ENCODE measurements at regions of chr6 and their contacts with region 1.

Region 1: GRCh38 chr6:7073821-7074525 is 33.8 kb upstream of the RREB1 start:
- DNase-seq: peak; percentile 58
- ATAC-seq: peak; percentile 98
- H3K4me3 Mint-ChIP-seq: peak overlapping the region; percentile 57
- H3K27ac Mint-ChIP-seq: peak overlapping the region; percentile 87
- H3K4me1 Mint-ChIP-seq: peaks cover 28% of the 10 kb centered on the region
- H3K27me3 Mint-ChIP-seq: no peaks in the 10 kb centered on the region
- CTCF ChIP-seq: no peak

Region 2: DNA sequence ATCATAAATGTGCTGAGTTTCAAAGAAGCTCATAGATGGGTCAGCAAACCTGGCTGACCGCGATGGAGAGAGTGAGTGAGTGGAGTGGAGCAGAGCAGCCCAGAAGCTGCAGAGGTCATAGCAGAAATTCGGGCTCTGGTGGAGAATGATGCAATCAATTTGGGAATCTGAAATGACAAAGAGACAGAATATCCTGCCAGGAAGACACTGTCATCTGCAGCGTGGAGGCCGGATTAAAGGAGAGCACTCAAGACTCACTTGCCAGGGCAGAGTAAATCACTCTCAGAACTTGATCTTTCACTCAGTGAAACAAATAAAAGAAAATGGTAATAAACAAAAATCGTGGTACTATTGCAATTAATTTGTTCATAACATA is 75.8 kb before region 1 on chr6:
- CTCF ChIA-PET with region 1: no interaction called
- POLR2A ChIA-PET with region 1: no interaction called
- intact Hi-C with region 1: no loop called
- DNase-seq: no peak
- ATAC-seq: no peak
- H3K4me3 Mint-ChIP-seq: no peak overlapping the region
- H3K27ac Mint-ChIP-seq: no peak overlapping the region
- H3K4me1 Mint-ChIP-seq: no peaks in the 10 kb centered on the region
- H3K27me3 Mint-ChIP-seq: no peaks in the 10 kb centered on the region
- CTCF ChIP-seq: no peak

Region 3: GRCh38 chr6:7051233-7052114 is 22.5 kb before region 1 on chr6:
- CTCF ChIA-PET with region 1: interaction called, 4 read pairs
- POLR2A ChIA-PET with region 1: interaction called, 42 read pairs
- intact Hi-C with region 1: loop called (anchors 1 kb)
- DNase-seq: peak; percentile 61
- ATAC-seq: peak; percentile 86
- H3K4me3 Mint-ChIP-seq: peak overlapping the region; percentile 76
- H3K27ac Mint-ChIP-seq: peak overlapping the region; percentile 56
- H3K4me1 Mint-ChIP-seq: peaks cover 38% of the 10 kb centered on the region
- H3K27me3 Mint-ChIP-seq: no peaks in the 10 kb centered on the region
- CTCF ChIP-seq: no peak

Region 4: GRCh38 chr6:7140631-7141378 is 66.8 kb after region 1 on chr6:
- CTCF ChIA-PET with region 1: no interaction called
- POLR2A ChIA-PET with region 1: interaction called, 12 read pairs
- intact Hi-C with region 1: loop called (anchors 2 kb)
- DNase-seq: peak; percentile 78
- ATAC-seq: peak; percentile 82
- H3K4me3 Mint-ChIP-seq: peak overlapping the region; percentile 85
- H3K27ac Mint-ChIP-seq: peak overlapping the region; percentile 89
- H3K4me1 Mint-ChIP-seq: peaks cover 77% of the 10 kb centered on the region
- H3K27me3 Mint-ChIP-seq: no peaks in the 10 kb centered on the region
- CTCF ChIP-seq: no peak

Region 5: DNA sequence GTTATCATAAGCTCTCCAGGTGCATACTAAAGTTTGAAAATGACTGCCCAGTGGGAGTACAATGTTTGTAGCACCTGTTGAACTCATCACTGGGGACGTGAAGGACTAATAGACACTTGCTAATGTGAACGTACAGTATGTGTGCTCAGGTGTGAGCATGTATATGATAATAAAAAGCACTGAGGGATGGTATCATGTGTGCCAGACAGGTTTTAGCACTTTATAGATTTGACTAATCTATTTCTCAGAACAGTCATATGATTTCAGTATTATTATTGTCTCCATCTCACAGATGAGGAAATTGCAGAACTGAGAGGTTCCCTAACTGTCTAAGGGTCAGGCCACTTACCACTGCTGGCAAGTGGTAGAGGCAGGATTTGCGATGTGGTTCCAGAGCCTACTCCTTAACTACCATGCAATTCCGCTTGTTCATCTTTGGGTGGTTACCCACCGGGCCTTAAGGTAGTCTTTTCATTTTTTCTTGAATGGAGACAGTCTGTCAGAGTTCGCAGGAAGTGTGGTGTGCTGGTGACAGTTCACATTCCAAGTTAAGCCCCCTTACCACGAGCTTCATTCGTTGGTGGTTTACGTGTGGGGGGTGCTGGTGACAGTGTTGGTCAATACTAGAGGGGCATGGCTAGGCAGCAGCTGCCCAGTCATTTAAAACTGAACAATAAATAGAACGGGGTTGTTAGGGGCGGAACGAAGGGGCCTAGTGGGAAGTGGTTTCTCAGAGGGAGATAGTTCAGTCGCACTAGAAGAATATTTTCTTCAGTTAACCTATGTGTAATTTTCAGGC is 80.6 kb after region 1 on chr6:
- CTCF ChIA-PET with region 1: no interaction called
- POLR2A ChIA-PET with region 1: no interaction called
- intact Hi-C with region 1: loop called (anchors 1 kb)
- DNase-seq: no peak
- ATAC-seq: peak; percentile 84
- H3K4me3 Mint-ChIP-seq: peak overlapping the region; percentile 74
- H3K27ac Mint-ChIP-seq: peak overlapping the region; percentile 92
- H3K4me1 Mint-ChIP-seq: peaks cover 89% of the 10 kb centered on the region
- H3K27me3 Mint-ChIP-seq: no peaks in the 10 kb centered on the region
- CTCF ChIP-seq: no peak

Region 6: DNA sequence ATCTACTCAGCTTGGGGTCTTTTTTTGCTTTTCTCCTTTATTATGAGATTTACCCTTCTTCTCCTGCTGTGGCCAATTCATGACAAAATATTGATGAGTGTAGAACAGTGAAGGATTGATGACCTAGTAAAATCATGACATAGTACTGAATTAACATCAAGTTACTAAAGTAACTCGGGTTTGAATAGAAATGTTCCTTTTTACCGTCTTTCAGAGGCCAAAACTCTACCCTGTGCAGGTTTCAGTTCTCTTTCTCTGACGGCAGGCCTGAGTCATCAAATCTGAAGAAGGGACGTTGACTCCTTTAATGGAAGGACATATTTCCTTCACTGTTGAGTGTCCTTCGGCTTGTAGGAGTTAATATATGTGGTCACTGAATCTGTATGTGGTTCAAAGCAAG is 114.5 kb after region 1 on chr6:
- CTCF ChIA-PET with region 1: no interaction called
- POLR2A ChIA-PET with region 1: interaction called, 11 read pairs
- intact Hi-C with region 1: no loop called
- DNase-seq: no peak
- ATAC-seq: peak; percentile 97
- H3K4me3 Mint-ChIP-seq: peak overlapping the region; percentile 45
- H3K27ac Mint-ChIP-seq: peak overlapping the region; percentile 72
- H3K4me1 Mint-ChIP-seq: peaks cover 21% of the 10 kb centered on the region
- H3K27me3 Mint-ChIP-seq: no peaks in the 10 kb centered on the region
- CTCF ChIP-seq: no peak

Region 7: GRCh38 chr6:7201688-7202541 is 127.9 kb after region 1 on chr6:
- CTCF ChIA-PET with region 1: no interaction called
- POLR2A ChIA-PET with region 1: interaction called, 3 read pairs
- intact Hi-C with region 1: loop called (anchors 1 kb)
- DNase-seq: peak; percentile 65
- ATAC-seq: peak; percentile 94
- H3K4me3 Mint-ChIP-seq: peak overlapping the region; percentile 50
- H3K27ac Mint-ChIP-seq: peak overlapping the region; percentile 74
- H3K4me1 Mint-ChIP-seq: peaks cover 56% of the 10 kb centered on the region
- H3K27me3 Mint-ChIP-seq: no peaks in the 10 kb centered on the region
- CTCF ChIP-seq: no peak

Measured in activated B cell treated with CpG ODN at 0.5 μM for 24 hours (primary cell).